ENCODE measurements at regions of chr2 and their contacts with region 1.

Region 1: GRCh38 chr2:231514103-231514950 is 15.9 kb downstream of the NMUR1 start:
- DNase-seq: peak; percentile 89
- H3K4me3 ChIP-seq: peak overlapping the region; percentile 88
- H3K27ac ChIP-seq: peak overlapping the region; percentile 57
- H3K27me3 ChIP-seq: no peaks in the 10 kb centered on the region
- CTCF ChIP-seq: no peak

Region 2: GRCh38 chr2:231463698-231464575 is 50.4 kb before region 1 on chr2 and contains the start of gene NCL:
- CTCF ChIA-PET with region 1: no interaction called
- POLR2A ChIA-PET with region 1: interaction called, 10 read pairs
- DNase-seq: peak; percentile 94
- H3K4me3 ChIP-seq: peak within 1 kb of the TSS; percentile 98
- H3K27ac ChIP-seq: peak within 1 kb of the TSS; percentile 99
- H3K27me3 ChIP-seq: no peaks in the 10 kb centered on the region
- CTCF ChIP-seq: no peak
- polyA plus RNA-seq, gene NCL: 165 and 225 TPM in 2 replicates